ENCODE measurements at regions of chr2 and their contacts with region 1.

Region 1: GRCh38 chr2:236526455-236527158 is 43.0 kb upstream of the ACKR3 start:
- H3K4me3 Mint-ChIP-seq: no peak overlapping the region
- H3K27ac Mint-ChIP-seq: no peak overlapping the region
- H3K4me1 Mint-ChIP-seq: peaks cover 16% of the 10 kb centered on the region
- H3K27me3 Mint-ChIP-seq: peaks cover under 1% of the 10 kb centered on the region

Region 2: DNA sequence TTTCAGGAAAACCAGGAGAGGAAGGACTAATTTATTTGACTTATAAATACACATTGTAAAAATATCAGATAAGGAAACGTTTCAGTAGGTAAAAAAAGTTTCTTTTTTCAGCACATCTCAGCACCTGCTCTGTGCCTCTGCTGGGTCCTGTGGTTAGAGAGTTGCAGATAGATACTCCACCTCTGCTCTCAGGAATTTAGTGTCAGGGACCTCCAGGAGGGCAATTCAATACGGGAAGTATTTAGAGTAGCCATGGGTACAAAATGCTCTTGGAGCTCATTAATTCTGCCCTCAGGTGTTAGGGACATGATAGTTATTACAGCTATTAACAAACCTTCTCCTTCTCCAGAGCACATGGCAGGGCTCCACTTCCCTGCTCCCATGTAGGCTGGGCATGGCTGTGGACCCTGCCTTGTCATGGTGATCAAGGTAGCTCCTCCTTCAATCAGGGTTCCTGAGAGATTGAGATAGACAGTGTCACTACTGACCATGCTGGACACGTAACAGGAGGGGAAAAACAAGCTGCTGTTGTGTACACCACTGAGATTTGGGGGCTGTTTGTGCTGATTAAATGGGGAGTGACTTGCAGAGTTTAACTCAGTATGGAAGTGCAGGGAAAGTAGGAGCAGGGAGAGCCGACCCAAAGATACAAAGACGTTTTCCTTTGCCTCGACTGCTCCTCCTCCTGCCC is 373.5 kb after region 1 on chr2:
- intact Hi-C with region 1: loop called (anchors 10 kb)
- H3K4me3 Mint-ChIP-seq: no peak overlapping the region
- H3K27ac Mint-ChIP-seq: no peak overlapping the region
- H3K4me1 Mint-ChIP-seq: no peaks in the 10 kb centered on the region
- H3K27me3 Mint-ChIP-seq: peaks cover 56% of the 10 kb centered on the region